ENCODE measurements at regions of chr5 and their contacts with region 1.

Region 1: DNA sequence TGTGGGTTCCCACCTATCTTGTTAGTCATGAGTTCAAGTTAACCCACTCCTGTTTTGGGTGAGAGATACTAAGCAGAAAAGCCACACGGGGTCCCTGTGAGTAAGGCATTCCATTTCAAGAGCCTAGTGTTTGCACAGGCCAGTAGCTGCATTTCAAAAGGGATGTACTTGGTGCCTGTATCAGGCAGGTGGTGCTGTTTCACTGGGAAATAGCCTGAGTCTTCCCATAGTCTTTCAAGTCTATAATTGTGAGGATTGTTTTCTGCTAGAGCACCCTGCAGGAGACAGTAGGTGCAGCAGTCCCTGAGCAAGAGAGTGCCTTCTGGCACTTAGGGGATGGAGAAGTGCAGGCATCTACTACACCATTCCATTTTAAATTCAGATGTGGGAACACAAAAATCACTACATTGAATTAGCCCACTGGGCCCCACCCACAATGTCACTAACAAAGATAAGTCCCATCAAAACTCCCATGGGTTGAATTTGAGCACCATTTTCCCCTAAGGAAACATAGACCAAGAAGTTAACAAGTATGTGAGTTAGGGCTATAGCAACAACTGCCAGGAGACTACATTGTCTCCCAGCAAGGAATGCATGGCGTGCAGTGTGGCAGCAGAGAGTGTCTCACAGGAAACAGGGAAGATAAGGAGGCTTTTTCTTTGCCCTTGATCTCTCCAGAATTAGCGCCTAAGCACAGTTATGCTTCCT is 263.2 kb downstream of the COX7C start:
- DNase-seq: peak; percentile 64
- ATAC-seq: peak; percentile 90
- H3K4me3 Mint-ChIP-seq: no peak overlapping the region
- H3K27ac Mint-ChIP-seq: no peak overlapping the region
- H3K4me1 Mint-ChIP-seq: no peaks in the 10 kb centered on the region
- H3K27me3 Mint-ChIP-seq: peaks cover 7% of the 10 kb centered on the region

Region 2: GRCh38 chr5:86968301-86968753 is 87.4 kb after region 1 on chr5:
- CTCF ChIA-PET with region 1: interaction called, 37 read pairs
- POLR2A ChIA-PET with region 1: no interaction called
- DNase-seq: no peak
- ATAC-seq: no peak
- H3K4me3 Mint-ChIP-seq: no peak overlapping the region
- H3K27ac Mint-ChIP-seq: no peak overlapping the region
- H3K4me1 Mint-ChIP-seq: no peaks in the 10 kb centered on the region
- H3K27me3 Mint-ChIP-seq: peaks cover 17% of the 10 kb centered on the region

Region 3: GRCh38 chr5:87010736-87011135 is 129.8 kb after region 1 on chr5:
- CTCF ChIA-PET with region 1: interaction called, 23 read pairs
- POLR2A ChIA-PET with region 1: no interaction called
- DNase-seq: no peak
- ATAC-seq: no peak
- H3K4me3 Mint-ChIP-seq: no peak overlapping the region
- H3K27ac Mint-ChIP-seq: no peak overlapping the region
- H3K4me1 Mint-ChIP-seq: no peaks in the 10 kb centered on the region
- H3K27me3 Mint-ChIP-seq: peaks cover 6% of the 10 kb centered on the region